SK-N-SH (cell line): ENCODE measurements at regions of chrX and their contacts with region 1.

Region 1: GRCh38 chrX:17788439-17788838 is 51.1 kb downstream of the SCML1 start:
- DNase-seq: peak; percentile 80
- H3K4me3 ChIP-seq: no peak overlapping the region
- H3K27ac ChIP-seq: no peak overlapping the region
- H3K4me1 ChIP-seq: no peaks in the 10 kb centered on the region
- H3K27me3 ChIP-seq: no peaks in the 10 kb centered on the region
- CTCF ChIP-seq: peak; percentile 85
- EP300 ChIP-seq: no peak
- RAD21 ChIP-seq: peak; percentile 75

Region 2: DNA sequence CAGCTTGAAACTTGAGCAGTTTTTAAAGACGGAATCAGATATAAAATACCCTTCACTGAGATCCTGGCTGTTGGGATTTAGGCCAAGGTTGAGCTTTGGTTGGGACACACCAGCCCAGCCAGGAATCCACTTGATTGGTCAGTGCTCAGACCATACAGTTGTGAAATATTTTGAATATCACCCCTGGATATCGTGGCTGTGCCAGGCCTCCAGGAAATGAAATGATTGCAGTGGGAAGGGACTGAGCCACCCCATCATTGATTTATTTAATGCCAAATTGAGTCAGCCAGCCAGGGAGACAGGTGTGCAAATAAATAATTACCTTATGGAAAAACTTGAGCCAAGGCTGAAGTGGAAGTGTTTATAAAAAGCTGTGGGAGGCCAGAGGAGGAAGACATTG is 179.5 kb before region 1 on chrX:
- CTCF ChIA-PET with region 1: no interaction called
- POLR2A ChIA-PET with region 1: no interaction called
- DNase-seq: no peak
- H3K4me3 ChIP-seq: no peak overlapping the region
- H3K27ac ChIP-seq: no peak overlapping the region
- H3K4me1 ChIP-seq: peaks cover 0 to 3% of the 10 kb centered on the region in 2 experiments; a peak in 1 of 4 replicates
- H3K27me3 ChIP-seq: no peaks in the 10 kb centered on the region
- CTCF ChIP-seq: no peak
- EP300 ChIP-seq: no peak
- RAD21 ChIP-seq: no peak

Region 3: GRCh38 chrX:17759990-17760389 is 28.4 kb before region 1 on chrX:
- CTCF ChIA-PET with region 1: no interaction called
- POLR2A ChIA-PET with region 1: no interaction called
- DNase-seq: no peak
- H3K4me3 ChIP-seq: no peak overlapping the region
- H3K27ac ChIP-seq: no peak overlapping the region
- H3K4me1 ChIP-seq: no peaks in the 10 kb centered on the region
- H3K27me3 ChIP-seq: peaks cover 8% of the 10 kb centered on the region
- CTCF ChIP-seq: no peak
- EP300 ChIP-seq: no peak
- RAD21 ChIP-seq: no peak

Region 4: GRCh38 chrX:17798921-17799320 is 10.5 kb after region 1 on chrX:
- CTCF ChIA-PET with region 1: interaction called, 24 read pairs
- POLR2A ChIA-PET with region 1: no interaction called
- DNase-seq: no peak
- H3K4me3 ChIP-seq: no peak overlapping the region
- H3K27ac ChIP-seq: no peak overlapping the region
- H3K4me1 ChIP-seq: no peaks in the 10 kb centered on the region; a peak in 1 of 4 replicates
- H3K27me3 ChIP-seq: no peaks in the 10 kb centered on the region; the same call in 1 of the 2 replicates
- CTCF ChIP-seq: no peak
- EP300 ChIP-seq: no peak
- RAD21 ChIP-seq: no peak

Region 5: GRCh38 chrX:17805120-17805519 is 16.7 kb after region 1 on chrX:
- CTCF ChIA-PET with region 1: interaction called, 24 read pairs
- POLR2A ChIA-PET with region 1: no interaction called
- DNase-seq: no peak
- H3K4me3 ChIP-seq: no peak overlapping the region
- H3K27ac ChIP-seq: no peak overlapping the region
- H3K4me1 ChIP-seq: no peaks in the 10 kb centered on the region; a peak in 1 of 4 replicates
- H3K27me3 ChIP-seq: no peaks in the 10 kb centered on the region; the same call in 1 of the 2 replicates
- CTCF ChIP-seq: peak; percentile 21; the same call in 1 of the 2 replicates
- EP300 ChIP-seq: no peak
- RAD21 ChIP-seq: no peak

Region 6: DNA sequence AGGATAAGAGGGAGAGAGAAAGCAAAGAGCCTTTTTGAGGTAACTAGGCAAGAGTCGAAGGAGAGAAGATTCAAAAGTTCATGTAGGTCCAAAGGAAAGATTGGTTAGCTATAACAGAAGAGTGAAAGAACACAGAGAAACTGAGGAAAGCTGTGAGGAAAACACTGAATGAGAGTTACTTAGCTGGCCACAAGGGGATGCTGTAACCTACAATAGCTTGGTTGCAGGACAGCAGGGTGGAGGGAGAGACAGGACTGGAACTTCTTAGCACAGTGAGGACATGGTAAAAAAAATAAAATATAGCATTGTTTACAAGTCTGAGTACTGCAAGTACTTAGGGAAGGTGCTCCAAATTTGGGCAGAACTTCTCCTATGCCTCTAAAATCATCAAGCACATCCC is 24.3 kb after region 1 on chrX:
- CTCF ChIA-PET with region 1: interaction called, 10 read pairs
- POLR2A ChIA-PET with region 1: no interaction called
- DNase-seq: peak; percentile 38
- H3K4me3 ChIP-seq: no peak overlapping the region
- H3K27ac ChIP-seq: no peak overlapping the region
- H3K4me1 ChIP-seq: no peaks in the 10 kb centered on the region
- H3K27me3 ChIP-seq: no peaks in the 10 kb centered on the region
- CTCF ChIP-seq: peak; percentile 50
- EP300 ChIP-seq: no peak
- RAD21 ChIP-seq: peak; percentile 66

Region 7: GRCh38 chrX:18210470-18210869 is 422.0 kb after region 1 on chrX:
- CTCF ChIA-PET with region 1: interaction called, 19 read pairs
- POLR2A ChIA-PET with region 1: no interaction called
- DNase-seq: no peak
- H3K4me3 ChIP-seq: no peak overlapping the region
- H3K27ac ChIP-seq: no peak overlapping the region
- H3K4me1 ChIP-seq: no peaks in the 10 kb centered on the region
- H3K27me3 ChIP-seq: no peaks in the 10 kb centered on the region
- CTCF ChIP-seq: peak; percentile 47
- EP300 ChIP-seq: no peak
- RAD21 ChIP-seq: peak; percentile 64